Left lung (tissue), 14 donors: ENCODE measurements at regions of chr5 and their contacts with region 1.

Region 1: GRCh38 chr5:42950440-42951292 is 89.5 kb downstream of the ANXA2R start:
- DNase-seq: peak; percentile 58 to 87 (median 74)
- ATAC-seq: peak; percentile 89
- H3K4me3 ChIP-seq: peak overlapping the region; percentile 34 to 50
- H3K27ac ChIP-seq: peak overlapping the region; percentile 86 to 100
- H3K4me1 ChIP-seq: peaks cover 8 to 30% of the 10 kb centered on the region in 2 donors
- H3K27me3 ChIP-seq: peaks cover 67 to 98% of the 10 kb centered on the region in 2 donors
- CTCF ChIP-seq: no peak

Region 2: DNA sequence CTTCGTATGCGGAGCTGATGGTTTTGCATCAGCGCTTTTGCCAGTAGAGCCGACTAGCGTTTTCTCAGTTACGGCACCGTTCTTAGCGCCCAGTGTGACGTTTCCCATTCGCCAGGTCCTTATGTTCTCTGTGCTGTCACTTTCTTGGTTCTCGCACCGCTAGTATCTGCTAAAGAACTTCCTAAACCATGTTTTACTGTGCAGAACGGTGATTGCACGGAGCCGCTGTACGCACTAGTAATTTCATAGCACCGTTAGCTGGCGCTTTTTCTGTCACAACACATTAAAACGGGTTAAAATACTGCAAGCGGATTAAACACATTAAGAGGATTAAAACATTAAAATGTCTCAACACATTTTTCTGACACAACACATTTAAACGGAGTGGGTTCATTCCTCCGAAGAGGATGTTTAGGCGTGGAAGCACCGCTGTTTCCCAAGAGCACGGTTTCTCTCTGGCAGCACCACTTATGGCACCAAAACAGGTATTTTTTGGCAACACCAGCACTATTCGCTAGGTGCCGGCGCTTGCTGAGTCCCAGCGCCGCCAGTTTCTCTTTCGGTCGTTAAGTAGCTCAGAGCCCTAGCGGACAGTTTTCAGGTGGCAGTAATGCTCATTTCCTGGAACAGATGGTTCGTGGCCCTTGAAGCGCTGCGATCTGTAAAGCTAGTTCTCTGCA is 69.1 kb after region 1 on chr5:
- intact Hi-C with region 1: loop called in 1 of 2 experiments (anchors 2 kb)
- DNase-seq: peak; percentile 52 to 76 (median 70)
- ATAC-seq: peak; percentile 64
- H3K4me3 ChIP-seq: peak overlapping the region; percentile 12 to 50
- H3K27ac ChIP-seq: peak overlapping the region; percentile 95 to 97
- H3K4me1 ChIP-seq: peaks cover 0 to 22% of the 10 kb centered on the region in 2 donors
- H3K27me3 ChIP-seq: peaks cover 26 to 82% of the 10 kb centered on the region in 2 donors
- CTCF ChIP-seq: peak; percentile 18 to 67

Region 3: GRCh38 chr5:43040287-43041098 is 89.8 kb after region 1 on chr5 and contains the start of gene ANXA2R:
- intact Hi-C with region 1: loop called in 1 of 2 experiments (anchors 10 kb)
- DNase-seq: peak; percentile 80 to 90 (median 89)
- ATAC-seq: peak; percentile 78
- H3K4me3 ChIP-seq: peak within 1 kb of the TSS; percentile 45 to 56
- H3K27ac ChIP-seq: peak within 1 kb of the TSS; percentile 97 to 100
- H3K4me1 ChIP-seq: peaks cover 0 to 39% of the 10 kb centered on the region in 2 donors
- H3K27me3 ChIP-seq: peaks cover 0 to 40% of the 10 kb centered on the region in 2 donors
- CTCF ChIP-seq: peak; percentile 81 to 87
- polyA plus RNA-seq, gene ANXA2R: 1.5 to 2.3 (median 1.8) TPM

Region 4: GRCh38 chr5:43833961-43834360 is 883.3 kb after region 1 on chr5:
- intact Hi-C with region 1: no loop called
- DNase-seq: no peak
- ATAC-seq: no peak
- H3K4me3 ChIP-seq: no peak overlapping the region
- H3K27ac ChIP-seq: no peak overlapping the region
- H3K4me1 ChIP-seq: no peaks in the 10 kb centered on the region
- H3K27me3 ChIP-seq: no peaks in the 10 kb centered on the region
- CTCF ChIP-seq: no peak